CD4-positive, alpha-beta memory T cell (primary cell): ENCODE measurements at regions of chr3 and their contacts with region 1.

Region 1: GRCh38 chr3:141441381-141442364 is 45.2 kb upstream of the RASA2 start:
- DNase-seq: peak; percentile 53 to 78 (median 71)
- H3K4me3 ChIP-seq: no peak overlapping the region
- H3K4me3 Mint-ChIP-seq: peak overlapping the region in 5 of 8 donors; percentile 6 to 59 (median 52)
- H3K27ac ChIP-seq: peak overlapping the region; percentile 29
- H3K27ac Mint-ChIP-seq: peak overlapping the region; percentile 18 to 86 (median 59)
- H3K4me1 ChIP-seq: peaks cover 17% of the 10 kb centered on the region
- H3K4me1 Mint-ChIP-seq: peaks cover 20 to 55% (median 34%) of the 10 kb centered on the region in 4 donors
- H3K27me3 ChIP-seq: no peaks in the 10 kb centered on the region
- H3K27me3 Mint-ChIP-seq: no peaks in the 10 kb centered on the region

Region 2: GRCh38 chr3:141231101-141231935 is 210.4 kb before region 1 on chr3 and contains the start of gene PXYLP1:
- CTCF ChIA-PET with region 1: interaction called, 3 read pairs
- POLR2A ChIA-PET with region 1: no interaction called
- intact Hi-C with region 1: loop called (anchors 5 kb)
- DNase-seq: peak; percentile 88 to 90 (median 89)
- H3K4me3 ChIP-seq: peak within 1 kb of the TSS; percentile 38 to 93
- H3K4me3 Mint-ChIP-seq: peak within 1 kb of the TSS; percentile 87 to 98 (median 93)
- H3K27ac ChIP-seq: peak within 1 kb of the TSS; percentile 81
- H3K27ac Mint-ChIP-seq: peak within 1 kb of the TSS; percentile 92 to 98 (median 96)
- H3K4me1 ChIP-seq: peaks cover 27% of the 10 kb centered on the region
- H3K4me1 Mint-ChIP-seq: peaks cover 28 to 59% (median 43%) of the 10 kb centered on the region in 4 donors
- H3K27me3 ChIP-seq: no peaks in the 10 kb centered on the region
- H3K27me3 Mint-ChIP-seq: peaks cover 0 to 2% of the 10 kb centered on the region in 2 donors
- total RNA-seq, gene PXYLP1: 17.2 to 22.6 TPM

Region 3: GRCh38 chr3:141311496-141312353 is 129.9 kb before region 1 on chr3:
- CTCF ChIA-PET with region 1: interaction called, 93 read pairs
- POLR2A ChIA-PET with region 1: interaction called, 4 read pairs
- intact Hi-C with region 1: loop called (anchors 1 kb)
- DNase-seq: peak; percentile 97 to 99 (median 98)
- H3K4me3 ChIP-seq: peak overlapping the region; percentile 68 to 73
- H3K4me3 Mint-ChIP-seq: peak overlapping the region; percentile 92 to 100 (median 98)
- H3K27ac ChIP-seq: peak overlapping the region; percentile 66
- H3K27ac Mint-ChIP-seq: peak overlapping the region; percentile 89 to 99 (median 97)
- H3K4me1 ChIP-seq: peaks cover 46% of the 10 kb centered on the region
- H3K4me1 Mint-ChIP-seq: peaks cover 32 to 60% (median 49%) of the 10 kb centered on the region in 4 donors
- H3K27me3 ChIP-seq: no peaks in the 10 kb centered on the region
- H3K27me3 Mint-ChIP-seq: no peaks in the 10 kb centered on the region

Region 4: GRCh38 chr3:141360888-141361598 is 80.6 kb before region 1 on chr3:
- CTCF ChIA-PET with region 1: interaction called, 76 read pairs
- POLR2A ChIA-PET with region 1: interaction called, 5 read pairs
- intact Hi-C with region 1: loop called (anchors 1 kb)
- DNase-seq: peak in 4 of 5 donors; percentile 46 to 60 (median 50)
- H3K4me3 ChIP-seq: no peak overlapping the region
- H3K4me3 Mint-ChIP-seq: peak overlapping the region in 6 of 8 donors; percentile 11 to 69 (median 50)
- H3K27ac ChIP-seq: no peak overlapping the region
- H3K27ac Mint-ChIP-seq: peak overlapping the region in 2 of 7 donors; percentile 7 to 39
- H3K4me1 ChIP-seq: peaks cover 10% of the 10 kb centered on the region
- H3K4me1 Mint-ChIP-seq: peaks cover 3 to 8% (median 7%) of the 10 kb centered on the region in 4 donors
- H3K27me3 ChIP-seq: no peaks in the 10 kb centered on the region
- H3K27me3 Mint-ChIP-seq: peaks cover 2 to 5% of the 10 kb centered on the region in 2 donors

Region 5: GRCh38 chr3:141386611-141387111 is 55.0 kb before region 1 on chr3:
- CTCF ChIA-PET with region 1: interaction called, 54 read pairs
- POLR2A ChIA-PET with region 1: no interaction called
- intact Hi-C with region 1: no loop called
- DNase-seq: no peak
- H3K4me3 ChIP-seq: peak overlapping the region in 1 of 2 donors; percentile 17
- H3K4me3 Mint-ChIP-seq: peak overlapping the region; percentile 85 to 91 (median 88)
- H3K27ac ChIP-seq: peak overlapping the region; percentile 33
- H3K27ac Mint-ChIP-seq: peak overlapping the region; percentile 45 to 89 (median 86)
- H3K4me1 ChIP-seq: peaks cover 15% of the 10 kb centered on the region
- H3K4me1 Mint-ChIP-seq: peaks cover 17 to 23% (median 20%) of the 10 kb centered on the region in 4 donors
- H3K27me3 ChIP-seq: no peaks in the 10 kb centered on the region
- H3K27me3 Mint-ChIP-seq: no peaks in the 10 kb centered on the region

Region 6: DNA sequence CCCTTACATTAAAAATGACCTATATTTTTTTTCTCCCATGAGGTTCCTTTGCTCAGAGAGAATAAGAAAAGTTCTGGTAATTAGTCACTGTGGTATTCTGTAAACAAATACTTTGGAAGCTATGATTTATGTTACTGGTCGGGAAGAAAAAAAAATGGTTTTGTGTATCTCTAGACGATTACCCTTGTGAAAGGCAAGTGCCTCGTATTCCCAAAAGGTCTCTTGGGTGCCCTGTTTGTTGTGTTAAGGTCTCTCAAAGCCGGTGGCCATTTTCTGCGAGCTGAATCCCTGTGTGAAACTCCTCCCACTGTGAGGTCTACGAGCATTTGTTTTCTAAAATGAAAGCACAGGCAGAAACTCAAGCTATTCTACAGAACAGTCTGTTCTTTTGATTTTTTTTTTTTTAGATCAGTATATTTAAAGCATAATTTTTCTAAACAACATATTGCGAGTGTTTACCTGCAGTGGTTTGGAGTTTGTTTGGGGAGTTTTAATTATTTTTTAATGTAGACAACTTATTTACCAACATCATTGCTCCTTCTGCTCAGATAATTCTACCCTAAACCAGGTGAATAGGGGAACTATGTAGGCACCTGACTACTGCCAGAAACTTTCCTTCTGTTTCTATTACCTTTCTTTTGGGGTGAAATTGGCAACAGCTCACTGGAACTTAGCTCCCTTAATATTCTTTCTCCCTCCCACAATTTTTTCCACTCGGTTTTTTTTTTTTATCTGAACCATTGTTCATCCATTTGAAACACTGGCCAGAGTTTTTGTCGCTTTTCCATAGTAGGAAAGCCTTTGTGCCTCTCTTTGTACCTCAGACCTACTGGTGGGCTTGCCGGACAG is 29.4 kb before region 1 on chr3:
- CTCF ChIA-PET with region 1: interaction called, 19 read pairs
- POLR2A ChIA-PET with region 1: interaction called, 4 read pairs
- intact Hi-C with region 1: loop called (anchors 1 kb)
- DNase-seq: peak; percentile 66 to 76 (median 72)
- H3K4me3 ChIP-seq: peak overlapping the region in 1 of 2 donors; percentile 21
- H3K4me3 Mint-ChIP-seq: peak overlapping the region; percentile 67 to 90 (median 86)
- H3K27ac ChIP-seq: peak overlapping the region; percentile 77
- H3K27ac Mint-ChIP-seq: peak overlapping the region; percentile 94 to 100 (median 99)
- H3K4me1 ChIP-seq: peaks cover 71% of the 10 kb centered on the region
- H3K4me1 Mint-ChIP-seq: peaks cover 57 to 85% (median 73%) of the 10 kb centered on the region in 4 donors
- H3K27me3 ChIP-seq: no peaks in the 10 kb centered on the region
- H3K27me3 Mint-ChIP-seq: no peaks in the 10 kb centered on the region

Region 7: GRCh38 chr3:141452036-141452435 is 10.4 kb after region 1 on chr3:
- CTCF ChIA-PET with region 1: interaction called, 65 read pairs
- POLR2A ChIA-PET with region 1: interaction called, 5 read pairs
- intact Hi-C with region 1: loop called (anchors 1 kb)
- DNase-seq: peak; percentile 57 to 64 (median 62)
- H3K4me3 ChIP-seq: no peak overlapping the region
- H3K4me3 Mint-ChIP-seq: no peak overlapping the region
- H3K27ac ChIP-seq: no peak overlapping the region
- H3K27ac Mint-ChIP-seq: no peak overlapping the region
- H3K4me1 ChIP-seq: peaks cover 18% of the 10 kb centered on the region
- H3K4me1 Mint-ChIP-seq: peaks cover 7 to 14% (median 10%) of the 10 kb centered on the region in 4 donors
- H3K27me3 ChIP-seq: no peaks in the 10 kb centered on the region
- H3K27me3 Mint-ChIP-seq: no peaks in the 10 kb centered on the region

Region 8: GRCh38 chr3:142209655-142210054 is 768.0 kb after region 1 on chr3:
- CTCF ChIA-PET with region 1: no interaction called
- POLR2A ChIA-PET with region 1: no interaction called
- intact Hi-C with region 1: no loop called
- DNase-seq: no peak
- H3K4me3 ChIP-seq: no peak overlapping the region
- H3K4me3 Mint-ChIP-seq: no peak overlapping the region
- H3K27ac ChIP-seq: no peak overlapping the region
- H3K27ac Mint-ChIP-seq: no peak overlapping the region
- H3K4me1 ChIP-seq: no peaks in the 10 kb centered on the region
- H3K4me1 Mint-ChIP-seq: no peaks in the 10 kb centered on the region
- H3K27me3 ChIP-seq: no peaks in the 10 kb centered on the region
- H3K27me3 Mint-ChIP-seq: no peaks in the 10 kb centered on the region